ENCODE measurements at regions of chr1 and their contacts with region 1.

Region 1: DNA sequence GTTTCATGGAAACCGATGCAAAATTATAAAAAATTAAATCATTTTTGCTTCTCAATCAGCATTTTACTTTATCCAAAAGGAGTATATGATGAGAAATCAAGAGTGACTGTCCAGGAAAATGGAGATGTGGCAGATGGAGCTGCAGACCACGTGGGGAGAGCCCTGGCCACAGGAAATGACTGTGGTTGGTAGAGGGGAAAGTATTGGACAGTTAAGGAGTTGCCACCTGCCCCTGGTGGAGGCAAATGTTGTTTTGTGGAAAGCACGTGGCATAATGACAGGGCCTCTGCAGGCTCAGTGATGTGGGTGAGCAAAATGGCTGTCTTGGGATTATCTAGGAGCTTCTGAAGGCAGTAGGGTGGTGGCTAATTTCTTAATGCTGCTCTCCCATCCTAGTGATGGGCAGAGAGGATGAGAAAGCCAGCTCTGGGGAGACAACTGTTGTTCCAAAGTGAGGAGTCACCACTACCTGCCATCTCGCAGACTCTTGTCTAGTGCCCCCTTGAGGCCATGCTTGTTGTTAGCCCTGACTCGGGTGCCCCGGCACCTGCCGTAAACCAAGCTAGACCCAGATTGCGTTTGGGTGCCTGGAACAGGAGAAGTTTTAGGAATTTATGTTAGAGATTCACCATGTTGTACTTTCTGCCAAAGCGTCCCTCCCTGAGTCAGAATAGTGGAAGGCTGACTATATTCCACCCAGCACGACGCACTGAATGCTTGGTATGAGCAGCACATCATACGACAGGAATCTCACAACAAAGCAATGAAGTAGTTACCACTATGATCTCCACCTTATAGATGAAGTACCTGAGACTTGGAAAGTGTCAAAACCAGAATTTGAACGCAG is 144.0 kb downstream of the ROR1 start:
- DNase-seq: peak; percentile 32
- ATAC-seq: peak; percentile 71
- H3K4me3 ChIP-seq: no peak overlapping the region
- H3K27ac ChIP-seq: no peak overlapping the region
- H3K4me1 ChIP-seq: peaks cover 0 to 15% of the 10 kb centered on the region in 2 experiments; a peak in 2 of 4 replicates
- H3K27me3 ChIP-seq: no peaks in the 10 kb centered on the region
- CTCF ChIP-seq: peak; percentile 32 to 72 (median 65); a peak in 5 of 6 replicates
- POLR2A ChIP-seq: no peak
- RAD21 ChIP-seq: peak; percentile 45; the same call in 1 of the 2 replicates

Region 2: DNA sequence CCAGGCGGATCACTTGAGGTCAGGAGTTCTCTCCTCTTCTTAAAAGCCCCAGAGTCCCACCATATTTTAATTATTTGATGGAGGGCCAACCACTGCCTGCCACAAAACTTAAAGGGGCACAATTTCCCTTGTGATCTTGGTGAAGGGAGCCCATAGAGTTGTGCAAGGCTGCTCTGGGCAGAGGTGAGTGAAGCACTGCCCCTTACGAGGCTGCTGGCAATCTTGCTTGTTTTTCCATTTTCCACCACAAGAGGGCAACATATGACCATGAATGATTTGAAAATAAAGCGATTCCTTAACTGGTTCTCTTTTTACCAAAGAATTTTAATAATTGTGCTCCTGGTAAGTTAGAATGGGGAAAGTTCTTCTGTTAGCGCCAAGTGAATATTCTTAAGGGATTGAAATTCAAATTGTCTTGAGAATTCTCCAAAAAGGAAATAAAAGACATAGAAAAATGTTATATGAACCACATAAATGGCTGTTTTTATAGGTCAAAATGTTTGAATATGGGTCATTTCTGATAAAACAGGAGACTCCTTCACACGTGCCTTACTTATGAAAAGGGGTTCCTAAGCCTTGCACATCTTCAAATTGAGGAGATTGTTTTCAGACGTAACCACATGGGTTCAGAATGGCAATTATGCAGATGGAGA is 301.9 kb before region 1 on chr1:
- CTCF ChIA-PET with region 1: no interaction called
- POLR2A ChIA-PET with region 1: no interaction called
- RAD21 ChIA-PET with region 1: interaction called in 1 of 2 experiments, 4 read pairs
- intact Hi-C with region 1: loop called (anchors 2 kb)
- DNase-seq: peak; percentile 58
- ATAC-seq: peak; percentile 89
- H3K4me3 ChIP-seq: no peak overlapping the region
- H3K27ac ChIP-seq: no peak overlapping the region
- H3K4me1 ChIP-seq: peaks cover 0 to 4% of the 10 kb centered on the region in 2 experiments; a peak in 1 of 4 replicates
- H3K27me3 ChIP-seq: no peaks in the 10 kb centered on the region
- CTCF ChIP-seq: peak; percentile 58 to 83 (median 73); a peak in 5 of 6 replicates
- POLR2A ChIP-seq: no peak
- RAD21 ChIP-seq: peak; percentile 87

Region 3: DNA sequence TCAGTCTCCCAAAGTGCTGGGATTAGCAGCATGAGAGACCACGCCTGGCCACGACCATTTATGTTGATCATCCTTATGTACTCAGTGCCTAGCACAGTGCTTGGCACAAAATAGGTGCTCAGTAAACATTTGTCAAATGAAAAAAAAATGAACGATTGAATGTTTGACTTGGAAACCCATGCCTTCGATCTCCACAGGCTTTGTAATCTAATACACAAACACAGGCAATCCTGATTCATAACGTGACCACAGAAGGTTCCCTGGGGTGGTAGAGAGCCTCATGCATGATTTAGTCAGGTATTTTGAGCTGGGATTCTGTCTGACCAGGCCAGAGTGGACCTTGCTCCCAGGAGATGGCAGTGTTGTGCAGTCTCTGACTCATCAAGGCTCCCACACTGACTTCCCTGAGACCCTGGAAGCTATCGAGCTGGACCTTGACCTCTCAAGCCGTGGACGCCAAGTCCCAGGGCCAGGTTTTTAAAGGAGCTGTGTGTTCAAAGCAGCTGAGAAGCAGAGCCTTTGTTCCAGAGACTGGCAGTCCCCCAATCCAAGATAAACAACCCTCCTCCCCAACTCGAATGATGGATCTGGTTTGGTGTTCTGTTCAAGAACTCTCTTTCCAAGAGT is 243.4 kb before region 1 on chr1:
- CTCF ChIA-PET with region 1: interaction called, 12 read pairs
- POLR2A ChIA-PET with region 1: no interaction called
- RAD21 ChIA-PET with region 1: interaction called, 3 read pairs
- intact Hi-C with region 1: no loop called
- DNase-seq: peak; percentile 67
- ATAC-seq: peak; percentile 96
- H3K4me3 ChIP-seq: no peak overlapping the region
- H3K27ac ChIP-seq: no peak overlapping the region
- H3K4me1 ChIP-seq: peaks cover 7 to 28% of the 10 kb centered on the region in 2 experiments; a peak in 3 of 4 replicates
- H3K27me3 ChIP-seq: no peaks in the 10 kb centered on the region
- CTCF ChIP-seq: peak; percentile 61 to 79 (median 77); a peak in 5 of 6 replicates
- POLR2A ChIP-seq: no peak
- RAD21 ChIP-seq: peak; percentile 88

Region 4: GRCh38 chr1:63773815-63774616 is 143.8 kb before region 1 on chr1 and contains the start of gene ROR1:
- CTCF ChIA-PET with region 1: no interaction called
- POLR2A ChIA-PET with region 1: no interaction called
- RAD21 ChIA-PET with region 1: no interaction called
- intact Hi-C with region 1: loop called (anchors 10 kb)
- DNase-seq: peak; percentile 72
- ATAC-seq: peak; percentile 95
- H3K4me3 ChIP-seq: peak within 1 kb of the TSS; percentile 58 to 70
- H3K27ac ChIP-seq: no peak within 1 kb of the TSS; the same call in 1 of the 2 replicates
- H3K4me1 ChIP-seq: peaks cover 11 to 24% of the 10 kb centered on the region in 2 experiments; a peak in 3 of 4 replicates
- H3K27me3 ChIP-seq: no peaks in the 10 kb centered on the region
- CTCF ChIP-seq: peak; percentile 52 to 67 (median 67)
- POLR2A ChIP-seq: no peak
- RAD21 ChIP-seq: peak; percentile 76
- total RNA-seq, gene ROR1: 2.7 TPM

Region 5: DNA sequence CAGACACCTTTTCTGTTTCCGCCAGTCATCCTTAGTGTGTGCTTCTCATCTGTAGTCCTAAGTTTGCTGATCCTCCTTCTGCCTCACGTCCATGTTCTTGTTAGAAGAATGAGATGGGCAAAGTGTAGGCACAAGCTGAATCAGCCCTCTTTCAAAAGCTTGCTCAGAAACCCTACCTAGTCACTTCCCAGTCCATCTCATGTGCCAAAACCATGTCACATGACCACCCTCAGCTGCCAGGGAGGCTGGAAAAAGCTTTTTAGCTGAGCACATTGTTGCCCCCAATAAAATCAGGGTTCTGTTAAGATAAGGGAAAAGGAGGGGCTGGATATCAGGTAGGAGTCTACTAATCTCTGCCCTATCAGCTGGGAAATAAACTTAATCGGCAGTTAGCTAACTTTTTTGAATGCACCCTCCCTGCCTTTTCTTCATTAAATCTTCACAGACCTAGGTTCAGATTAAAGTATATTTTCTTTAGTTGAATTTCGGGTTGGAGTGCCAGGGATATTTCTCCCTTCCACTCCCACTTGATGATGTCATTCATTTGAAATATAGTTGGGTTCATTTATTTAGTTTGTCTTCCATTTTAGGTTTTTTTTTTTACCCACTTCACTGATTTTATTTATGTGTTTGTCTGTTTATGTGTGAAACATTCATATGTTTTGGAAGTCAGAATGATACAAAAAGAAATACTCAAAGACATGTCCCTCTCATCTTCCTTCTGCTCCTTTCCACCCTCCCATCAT is 14.8 kb before region 1 on chr1:
- CTCF ChIA-PET with region 1: interaction called, 11 read pairs
- POLR2A ChIA-PET with region 1: no interaction called
- RAD21 ChIA-PET with region 1: no interaction called
- intact Hi-C with region 1: no loop called
- DNase-seq: no peak
- ATAC-seq: no peak
- H3K4me3 ChIP-seq: no peak overlapping the region
- H3K27ac ChIP-seq: no peak overlapping the region
- H3K4me1 ChIP-seq: peaks cover 0 to 14% of the 10 kb centered on the region in 2 experiments; a peak in 1 of 4 replicates
- H3K27me3 ChIP-seq: no peaks in the 10 kb centered on the region
- CTCF ChIP-seq: no peak
- POLR2A ChIP-seq: no peak
- RAD21 ChIP-seq: no peak

Region 6: DNA sequence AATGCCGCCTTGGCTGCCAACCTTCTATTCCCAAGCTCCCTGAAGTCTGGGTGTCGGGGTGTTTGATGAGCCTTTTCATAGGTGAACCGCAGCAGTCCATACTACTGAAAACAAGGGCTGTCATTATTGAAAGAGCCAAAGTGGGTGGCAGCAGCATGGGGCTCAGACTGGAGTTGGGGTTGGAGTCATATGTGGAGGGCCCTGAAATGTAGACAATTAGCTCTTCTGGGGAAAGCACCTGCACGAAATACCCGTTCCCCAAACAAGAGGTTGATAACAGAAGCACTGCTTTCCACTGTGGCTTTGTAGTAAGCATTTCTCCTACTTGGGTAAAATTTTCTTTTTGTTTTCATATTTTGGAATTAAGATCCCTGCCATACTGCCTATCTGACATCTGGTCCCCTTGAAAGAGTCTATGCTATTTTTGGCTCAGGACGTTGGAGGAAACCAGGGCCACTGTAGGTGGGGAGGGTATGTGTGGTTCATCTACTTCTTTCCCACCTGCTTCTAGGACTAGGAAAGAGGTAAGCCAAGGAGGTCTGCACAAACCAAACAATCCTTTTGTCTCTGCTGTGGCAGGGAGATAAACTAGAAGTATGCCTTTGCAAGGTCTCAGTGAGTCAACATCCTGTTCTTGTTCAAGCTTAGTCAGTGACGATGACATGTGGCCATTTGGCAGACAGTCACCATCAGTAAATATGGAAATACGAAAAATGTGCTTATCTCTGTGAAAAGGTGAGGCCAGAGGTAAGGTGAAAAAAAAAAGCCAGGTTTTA is 88.7 kb after region 1 on chr1:
- CTCF ChIA-PET with region 1: no interaction called
- POLR2A ChIA-PET with region 1: no interaction called
- RAD21 ChIA-PET with region 1: no interaction called
- intact Hi-C with region 1: no loop called
- DNase-seq: peak; percentile 19
- ATAC-seq: peak; percentile 76
- H3K4me3 ChIP-seq: 0 out of 4 replicates have a peak overlapping the region, but pooled peaks of 1 of the 2 experiments have one; percentile 14
- H3K27ac ChIP-seq: no peak overlapping the region
- H3K4me1 ChIP-seq: peaks cover 0 to 16% of the 10 kb centered on the region in 2 experiments; a peak in 2 of 4 replicates
- H3K27me3 ChIP-seq: no peaks in the 10 kb centered on the region
- CTCF ChIP-seq: no peak
- POLR2A ChIP-seq: no peak
- RAD21 ChIP-seq: no peak

Measured in HCT116 (cell line).